K562 (cell line): ENCODE measurements at regions of chr12 and their contacts with region 1.

Region 1: GRCh38 chr12:70660620-70661219 is 23.5 kb upstream of the PTPRB start:
- DNase-seq: peak; percentile 27 to 95 (median 54)
- ATAC-seq: peak; percentile 91
- H3K4me3 ChIP-seq: peak overlapping the region; percentile 33
- H3K27ac ChIP-seq: peak overlapping the region; percentile 81
- H3K4me1 ChIP-seq: peaks cover 4 to 43% of the 10 kb centered on the region in 2 experiments
- H3K27me3 ChIP-seq: no peaks in the 10 kb centered on the region
- CTCF ChIP-seq: no peak
- EP300 ChIP-seq: peak; percentile 81
- POLR2A ChIP-seq: peak; percentile 89
- RAD21 ChIP-seq: peak in 1 of 2 experiments; percentile 12; a peak in 1 of 4 replicates

Region 2: DNA sequence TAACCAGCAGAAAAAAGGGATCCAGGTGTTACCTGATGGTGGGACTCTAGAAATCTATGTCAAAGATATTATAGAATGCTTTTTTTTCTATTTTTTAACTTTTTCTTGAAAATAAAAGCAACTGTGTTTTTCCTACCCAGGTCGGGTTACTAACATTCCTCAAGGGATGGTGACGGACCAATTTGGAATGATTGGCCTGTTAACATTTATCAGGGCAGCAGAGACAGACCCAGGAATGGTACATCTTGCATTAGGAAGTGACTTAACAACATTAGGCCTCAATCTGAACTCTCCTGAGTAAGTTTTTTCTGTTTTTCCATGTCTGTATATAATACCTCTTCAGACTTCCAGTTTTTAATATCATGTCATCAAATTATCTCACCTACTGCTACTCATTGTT is 322.2 kb before region 1 on chr12:
- CTCF ChIA-PET with region 1: no interaction called
- POLR2A ChIA-PET with region 1: no interaction called
- in situ Hi-C with region 1: no loop called
- intact Hi-C with region 1: no loop called
- DNase-seq: no peak
- ATAC-seq: no peak
- H3K4me3 ChIP-seq: no peak overlapping the region
- H3K27ac ChIP-seq: no peak overlapping the region
- H3K4me1 ChIP-seq: no peaks in the 10 kb centered on the region
- H3K27me3 ChIP-seq: no peaks in the 10 kb centered on the region
- CTCF ChIP-seq: no peak
- EP300 ChIP-seq: no peak
- POLR2A ChIP-seq: no peak
- RAD21 ChIP-seq: no peak

Region 3: GRCh38 chr12:70609711-70610491 is 50.8 kb before region 1 on chr12:
- CTCF ChIA-PET with region 1: no interaction called
- POLR2A ChIA-PET with region 1: no interaction called
- in situ Hi-C with region 1: no loop called
- intact Hi-C with region 1: loop called (anchors 5 kb)
- DNase-seq: peak; percentile 14 to 40 (median 24)
- ATAC-seq: peak; percentile 86
- H3K4me3 ChIP-seq: peak overlapping the region; percentile 45
- H3K27ac ChIP-seq: peak overlapping the region; percentile 21; the same call in 1 of the 3 replicates
- H3K4me1 ChIP-seq: peaks cover 0 to 10% of the 10 kb centered on the region in 2 experiments; a peak in 2 of 5 replicates
- H3K27me3 ChIP-seq: no peaks in the 10 kb centered on the region
- CTCF ChIP-seq: no peak
- EP300 ChIP-seq: no peak
- POLR2A ChIP-seq: no peak
- RAD21 ChIP-seq: no peak

Region 4: GRCh38 chr12:70648831-70649230 is 11.9 kb before region 1 on chr12:
- CTCF ChIA-PET with region 1: no interaction called
- POLR2A ChIA-PET with region 1: interaction called, 15 read pairs
- in situ Hi-C with region 1: no loop called
- intact Hi-C with region 1: no loop called
- DNase-seq: no peak
- ATAC-seq: no peak
- H3K4me3 ChIP-seq: no peak overlapping the region
- H3K27ac ChIP-seq: no peak overlapping the region
- H3K4me1 ChIP-seq: peaks cover 2 to 33% of the 10 kb centered on the region in 2 experiments; a peak in 4 of 5 replicates
- H3K27me3 ChIP-seq: no peaks in the 10 kb centered on the region
- CTCF ChIP-seq: no peak
- EP300 ChIP-seq: no peak
- POLR2A ChIP-seq: no peak
- RAD21 ChIP-seq: no peak

Region 5: DNA sequence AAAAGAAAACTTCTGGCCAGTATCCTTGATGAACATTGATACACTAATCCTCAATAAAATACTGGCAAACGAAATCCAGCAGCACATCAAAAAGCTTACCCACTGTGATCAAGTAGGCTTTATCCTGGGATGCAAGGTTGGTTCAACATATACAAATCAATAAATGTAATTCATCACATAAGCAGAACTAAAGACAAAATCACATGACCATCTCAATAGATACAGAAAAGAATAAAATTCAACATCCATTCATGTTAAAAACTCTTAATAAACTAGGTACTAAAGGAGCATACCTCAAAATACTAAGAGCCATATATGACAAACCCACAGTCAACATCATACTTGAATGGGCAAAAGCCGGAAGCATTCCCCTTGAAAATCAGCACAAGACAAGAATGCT is 48.3 kb after region 1 on chr12:
- CTCF ChIA-PET with region 1: no interaction called
- POLR2A ChIA-PET with region 1: no interaction called
- in situ Hi-C with region 1: no loop called
- intact Hi-C with region 1: loop called (anchors 1 kb)
- DNase-seq: no peak
- ATAC-seq: no peak
- H3K4me3 ChIP-seq: no peak overlapping the region
- H3K27ac ChIP-seq: no peak overlapping the region
- H3K4me1 ChIP-seq: no peaks in the 10 kb centered on the region; a peak in 2 of 5 replicates
- H3K27me3 ChIP-seq: no peaks in the 10 kb centered on the region
- CTCF ChIP-seq: no peak
- EP300 ChIP-seq: no peak
- POLR2A ChIP-seq: no peak
- RAD21 ChIP-seq: no peak